ENCODE measurements at regions of chr7 and their contacts with region 1.

Region 1: DNA sequence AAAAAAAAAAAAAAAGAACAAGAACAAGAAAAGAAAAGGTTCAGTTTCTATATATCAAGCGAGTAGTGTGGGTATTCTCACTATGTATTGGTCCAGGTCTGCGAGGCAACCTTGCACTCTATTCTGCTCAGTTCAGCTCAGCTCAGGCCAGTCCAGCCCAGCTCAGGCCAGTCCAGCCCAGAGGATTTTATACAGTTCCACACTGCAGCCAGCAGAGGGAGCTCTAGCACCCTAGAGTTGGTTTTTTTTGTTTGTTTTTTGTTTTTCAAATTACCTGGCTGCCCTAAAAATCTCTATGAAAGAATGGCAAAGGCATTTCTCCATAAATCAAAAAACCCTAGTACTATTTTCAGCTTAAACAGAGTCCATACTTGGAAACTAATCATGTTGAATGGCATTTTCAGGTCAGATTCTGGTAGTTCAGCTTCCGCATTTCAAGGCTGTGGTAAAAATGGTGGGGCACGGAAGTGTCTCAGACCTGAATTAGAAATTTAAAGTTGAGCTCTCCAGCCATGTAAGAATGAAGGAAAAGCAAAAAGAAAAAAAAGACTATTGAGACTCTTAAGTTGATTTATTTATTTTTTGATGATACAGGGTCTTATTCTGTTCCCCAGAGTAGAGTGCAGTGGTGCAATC is 55.2 kb upstream of the GSDME start:
- DNase-seq: peak; percentile 54
- H3K4me3 ChIP-seq: no peak overlapping the region
- H3K27ac ChIP-seq: no peak overlapping the region
- H3K4me1 ChIP-seq: no peaks in the 10 kb centered on the region
- H3K27me3 ChIP-seq: no peaks in the 10 kb centered on the region
- CTCF ChIP-seq: peak; percentile 85 to 86
- POLR2A ChIP-seq: no peak

Region 2: DNA sequence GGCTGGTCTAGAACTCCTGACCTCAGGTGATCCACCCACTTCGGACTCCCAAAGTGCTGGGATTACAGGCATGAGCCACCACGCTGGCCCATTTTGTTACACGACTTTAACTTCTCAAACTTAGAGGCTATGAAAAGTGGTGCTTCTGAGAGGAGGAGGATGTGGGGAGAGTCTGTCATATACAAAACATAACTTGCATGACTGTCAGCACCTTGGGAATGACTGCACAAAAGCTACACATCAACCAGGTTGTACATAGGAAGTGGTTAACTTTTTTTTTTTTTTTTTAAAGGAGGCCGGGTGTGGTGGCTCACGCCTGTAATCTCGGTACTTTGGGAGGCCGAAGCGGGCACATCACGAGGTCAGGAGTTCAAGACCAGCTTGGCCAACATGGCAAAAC is 11.8 kb before region 1 on chr7:
- CTCF ChIA-PET with region 1: interaction called, 18 read pairs
- POLR2A ChIA-PET with region 1: no interaction called
- dilution Hi-C with region 1: no loop called
- intact Hi-C with region 1: no loop called
- DNase-seq: no peak
- H3K4me3 ChIP-seq: no peak overlapping the region
- H3K27ac ChIP-seq: no peak overlapping the region
- H3K4me1 ChIP-seq: no peaks in the 10 kb centered on the region
- H3K27me3 ChIP-seq: no peaks in the 10 kb centered on the region
- CTCF ChIP-seq: no peak
- POLR2A ChIP-seq: no peak

Region 3: GRCh38 chr7:24877790-24878311 is 65.4 kb after region 1 on chr7:
- CTCF ChIA-PET with region 1: interaction called, 15 read pairs
- POLR2A ChIA-PET with region 1: no interaction called
- dilution Hi-C with region 1: no loop called
- intact Hi-C with region 1: no loop called
- DNase-seq: no peak
- H3K4me3 ChIP-seq: no peak overlapping the region
- H3K27ac ChIP-seq: no peak overlapping the region
- H3K4me1 ChIP-seq: peaks cover 5% of the 10 kb centered on the region
- H3K27me3 ChIP-seq: no peaks in the 10 kb centered on the region
- CTCF ChIP-seq: no peak
- POLR2A ChIP-seq: no peak

Region 4: DNA sequence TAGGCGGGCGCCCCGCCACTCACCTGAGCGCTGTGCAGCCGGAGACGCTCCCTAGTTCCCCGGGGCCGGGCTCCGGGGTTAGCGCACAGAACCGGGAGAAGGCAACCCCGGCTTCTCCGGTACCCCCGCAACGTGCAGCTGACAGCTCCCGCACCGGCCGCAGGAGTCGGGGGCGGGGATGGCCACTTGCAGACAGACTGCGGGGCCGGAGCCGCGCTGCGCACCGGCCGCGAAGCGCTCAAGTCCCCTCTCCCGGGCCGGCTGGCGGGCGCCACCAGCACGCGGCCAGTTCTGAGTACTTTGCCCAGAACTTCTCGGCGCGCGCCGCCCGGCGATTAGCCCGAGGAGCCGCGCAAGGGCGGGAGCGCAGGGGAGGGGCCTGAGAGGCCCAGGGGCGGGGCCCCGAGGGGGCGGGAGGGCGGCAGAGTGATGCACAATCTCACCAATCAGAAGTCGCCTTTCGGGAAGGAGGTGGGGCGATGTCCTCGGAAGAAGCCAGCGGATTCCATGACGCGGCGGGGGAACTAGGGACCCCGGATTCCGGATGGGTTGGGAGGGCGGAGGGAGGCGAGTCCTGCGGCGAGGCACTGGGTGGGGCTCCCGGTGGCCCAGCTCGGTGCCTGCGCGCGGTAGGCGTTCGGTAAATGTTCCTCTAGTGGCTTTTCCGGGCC is 167.6 kb after region 1 on chr7 and contains the start of gene OSBPL3:
- CTCF ChIA-PET with region 1: interaction called, 50 read pairs
- POLR2A ChIA-PET with region 1: no interaction called
- dilution Hi-C with region 1: no loop called
- intact Hi-C with region 1: no loop called
- DNase-seq: peak; percentile 95
- H3K4me3 ChIP-seq: peak within 1 kb of the TSS; percentile 71 to 82 (median 75)
- H3K27ac ChIP-seq: peak within 1 kb of the TSS; percentile 65
- H3K4me1 ChIP-seq: peaks cover 38% of the 10 kb centered on the region
- H3K27me3 ChIP-seq: no peaks in the 10 kb centered on the region
- CTCF ChIP-seq: no peak
- POLR2A ChIP-seq: peak; percentile 58
- total RNA-seq, gene OSBPL3: 27.1 and 31.3 TPM in 2 replicates

Region 5: DNA sequence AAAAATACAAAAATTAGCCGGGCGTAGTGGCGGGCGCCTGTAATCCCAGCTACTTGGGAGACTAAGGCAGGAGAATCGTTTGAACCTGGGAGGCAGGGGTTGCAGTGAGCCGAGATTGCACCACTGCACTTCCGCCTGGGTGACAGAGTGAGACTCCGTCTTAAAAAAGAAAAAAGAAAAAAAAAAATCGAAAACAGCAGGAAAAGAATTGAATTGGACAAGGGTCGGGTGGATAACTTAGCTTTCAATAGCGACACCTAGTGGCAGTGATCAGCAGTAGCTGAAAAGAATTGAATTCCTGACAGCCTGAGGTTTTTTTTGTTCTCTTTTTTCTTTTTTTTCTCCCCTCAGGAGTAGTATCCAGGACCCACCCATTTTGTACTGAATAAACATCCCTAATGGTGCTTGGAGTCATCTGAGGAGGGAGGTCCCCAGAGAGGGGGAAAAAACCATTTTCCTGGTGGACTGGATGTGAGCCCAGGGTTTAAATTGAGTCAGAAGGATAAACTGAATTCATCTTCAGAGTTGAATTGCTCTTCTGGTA is 257.5 kb after region 1 on chr7:
- CTCF ChIA-PET with region 1: interaction called, 129 read pairs
- POLR2A ChIA-PET with region 1: no interaction called
- dilution Hi-C with region 1: no loop called
- intact Hi-C with region 1: loop called (anchors 1 kb)
- DNase-seq: peak; percentile 70
- H3K4me3 ChIP-seq: no peak overlapping the region
- H3K27ac ChIP-seq: no peak overlapping the region
- H3K4me1 ChIP-seq: no peaks in the 10 kb centered on the region
- H3K27me3 ChIP-seq: peaks cover 0 to 2% of the 10 kb centered on the region in 2 experiments
- CTCF ChIP-seq: peak; percentile 65 to 73
- POLR2A ChIP-seq: no peak

Region 6: GRCh38 chr7:25083201-25083600 is 270.8 kb after region 1 on chr7:
- CTCF ChIA-PET with region 1: interaction called, 268 read pairs
- POLR2A ChIA-PET with region 1: interaction called, 3 read pairs
- dilution Hi-C with region 1: no loop called
- intact Hi-C with region 1: no loop called
- DNase-seq: no peak
- H3K4me3 ChIP-seq: no peak overlapping the region
- H3K27ac ChIP-seq: no peak overlapping the region
- H3K4me1 ChIP-seq: no peaks in the 10 kb centered on the region
- H3K27me3 ChIP-seq: peaks cover 1 to 2% of the 10 kb centered on the region in 2 experiments
- CTCF ChIP-seq: no peak
- POLR2A ChIP-seq: no peak

Region 7: DNA sequence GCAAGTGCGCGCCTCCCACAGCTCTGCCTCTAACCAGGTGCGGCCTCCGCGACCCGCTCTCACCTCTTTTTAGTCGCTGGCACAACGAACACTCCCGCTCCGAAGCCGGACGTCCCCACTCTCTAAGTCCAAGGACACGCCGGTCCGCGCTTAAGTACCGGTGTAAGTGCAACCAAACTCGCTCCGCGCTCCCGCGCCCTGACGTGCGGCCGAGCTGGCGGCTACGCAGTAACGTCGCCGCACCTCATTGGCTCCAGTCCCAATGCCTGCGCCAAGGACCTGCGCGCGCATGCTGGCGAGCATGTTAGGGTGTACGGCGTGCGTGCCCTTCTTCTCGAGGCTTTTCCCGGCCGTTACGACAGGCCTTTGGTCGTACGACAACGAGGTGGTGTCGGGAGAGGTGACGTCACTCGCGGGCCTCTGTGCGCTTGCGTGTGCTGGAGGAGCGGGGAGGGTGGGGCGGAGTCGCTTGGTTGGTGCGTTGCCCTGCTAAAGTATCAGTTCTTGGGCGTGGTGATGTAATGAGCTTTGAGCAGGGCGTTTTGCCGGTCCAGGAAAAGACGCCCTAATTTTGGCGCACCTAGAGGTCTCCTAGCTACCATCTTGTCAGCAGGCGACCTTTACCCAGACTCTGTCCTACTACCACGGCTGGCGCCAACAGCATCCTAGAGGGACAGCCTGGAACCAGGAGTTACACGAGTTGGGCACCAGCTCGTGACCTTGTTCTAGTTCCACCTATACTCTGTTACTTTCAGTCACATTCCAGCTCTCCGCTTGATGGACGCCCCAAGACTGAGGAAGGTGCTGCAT is 312.9 kb after region 1 on chr7 and contains the start of gene CYCS:
- CTCF ChIA-PET with region 1: interaction called, 17 read pairs
- POLR2A ChIA-PET with region 1: no interaction called
- dilution Hi-C with region 1: no loop called
- intact Hi-C with region 1: no loop called
- DNase-seq: peak; percentile 100
- H3K4me3 ChIP-seq: peak within 1 kb of the TSS; percentile 82 to 98 (median 91)
- H3K27ac ChIP-seq: peak within 1 kb of the TSS; percentile 67
- H3K4me1 ChIP-seq: peaks cover 9% of the 10 kb centered on the region
- H3K27me3 ChIP-seq: peaks cover 0 to 3% of the 10 kb centered on the region in 2 experiments
- CTCF ChIP-seq: no peak
- POLR2A ChIP-seq: peak; percentile 98
- total RNA-seq, gene CYCS: 134 and 143 TPM in 2 replicates